ENCODE measurements at regions of chr3 and their contacts with region 1.

Region 1: GRCh38 chr3:140972833-140973232 is 31.2 kb downstream of the SLC25A36 start:
- DNase-seq: no peak
- ATAC-seq: no peak
- H3K4me3 ChIP-seq: no peak overlapping the region
- H3K27ac ChIP-seq: no peak overlapping the region
- H3K4me1 ChIP-seq: peaks cover 2% of the 10 kb centered on the region
- H3K27me3 ChIP-seq: no peaks in the 10 kb centered on the region

Region 2: DNA sequence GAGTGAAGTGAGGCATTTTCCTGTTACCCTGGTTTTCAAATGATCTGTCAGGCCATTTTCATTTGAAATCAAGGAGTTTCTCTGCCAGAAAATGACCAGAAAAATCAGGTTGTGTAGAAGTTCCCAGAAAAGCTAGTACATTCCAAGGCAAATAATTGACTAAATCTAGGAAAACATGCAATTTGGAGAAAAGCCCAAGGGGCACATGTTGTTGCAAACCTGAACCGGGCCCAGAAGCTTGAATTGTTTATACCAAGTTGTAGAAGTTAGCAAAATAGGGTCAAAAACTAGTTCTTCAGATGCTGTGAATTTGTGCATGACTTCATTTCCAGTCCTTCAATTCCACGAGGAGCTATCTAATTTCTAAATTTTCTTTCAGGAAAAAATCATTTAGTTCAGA is 264.0 kb before region 1 on chr3:
- intact Hi-C with region 1: no loop called
- DNase-seq: no peak
- ATAC-seq: peak in 1 of 2 donors; percentile 43
- H3K4me3 ChIP-seq: no peak overlapping the region
- H3K27ac ChIP-seq: no peak overlapping the region
- H3K4me1 ChIP-seq: no peaks in the 10 kb centered on the region
- H3K27me3 ChIP-seq: no peaks in the 10 kb centered on the region

Region 3: DNA sequence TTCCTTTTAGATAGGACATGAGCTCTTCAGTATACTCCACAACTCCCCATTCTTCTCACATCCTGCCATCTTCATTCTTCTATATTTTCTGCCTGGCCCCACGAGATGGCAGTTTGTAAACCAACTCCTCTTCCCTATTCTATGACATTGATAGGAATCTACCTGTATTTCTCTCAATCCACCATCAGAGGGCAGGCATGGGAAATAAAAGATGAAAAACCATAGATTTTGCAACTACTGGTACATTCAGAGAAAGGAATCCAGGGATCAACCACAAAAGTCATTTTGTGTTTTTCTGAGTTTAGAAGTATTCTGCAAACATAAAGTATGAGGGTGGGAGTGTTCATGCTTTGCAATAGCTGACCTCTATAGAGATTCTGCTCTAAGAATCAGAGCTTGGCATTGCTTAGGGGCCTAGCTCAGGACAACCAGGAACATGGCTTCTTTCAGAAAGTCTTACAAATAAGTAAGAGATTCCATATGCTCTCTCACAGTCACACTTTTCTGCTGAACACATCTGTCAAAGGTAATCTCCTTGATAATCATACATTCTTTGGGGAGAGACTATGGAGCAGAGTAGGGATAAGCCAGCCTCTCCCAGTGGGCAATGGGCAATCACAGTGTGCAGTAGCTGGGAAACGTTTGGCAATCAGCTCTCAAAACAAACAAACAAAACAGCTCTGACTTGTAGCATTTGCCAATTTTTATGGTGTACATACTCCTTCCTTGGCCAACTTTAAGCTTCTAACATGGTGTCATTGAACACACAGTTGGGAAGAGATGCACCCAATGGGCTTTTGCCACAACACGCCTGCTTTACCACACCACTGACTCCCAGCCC is 74.3 kb before region 1 on chr3:
- intact Hi-C with region 1: no loop called
- DNase-seq: no peak
- ATAC-seq: no peak
- H3K4me3 ChIP-seq: no peak overlapping the region
- H3K27ac ChIP-seq: no peak overlapping the region
- H3K4me1 ChIP-seq: no peaks in the 10 kb centered on the region
- H3K27me3 ChIP-seq: no peaks in the 10 kb centered on the region

Region 4: DNA sequence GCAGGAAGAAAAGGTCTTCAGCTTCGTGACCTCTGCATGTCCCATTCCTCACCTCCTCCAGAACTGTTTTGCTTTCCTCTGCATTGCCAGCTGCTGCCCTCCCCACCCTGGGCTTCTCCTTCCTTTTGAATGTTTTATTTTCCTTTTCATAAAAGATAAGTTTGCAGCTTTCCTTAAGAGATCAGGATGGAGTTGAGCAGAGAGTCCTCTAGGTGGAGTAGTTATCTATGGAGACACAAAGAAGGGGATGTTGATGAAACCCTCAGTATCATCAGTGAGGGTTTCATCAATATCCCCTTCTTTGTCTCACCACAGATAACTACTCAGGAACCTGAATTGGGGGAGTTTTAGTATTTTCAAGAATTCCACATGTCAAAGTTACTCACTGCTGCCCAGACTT is 50.2 kb before region 1 on chr3:
- intact Hi-C with region 1: loop called in 1 of 4 experiments (anchors 10 kb)
- DNase-seq: no peak
- ATAC-seq: no peak
- H3K4me3 ChIP-seq: no peak overlapping the region
- H3K27ac ChIP-seq: peak overlapping the region; percentile 28
- H3K4me1 ChIP-seq: no peaks in the 10 kb centered on the region
- H3K27me3 ChIP-seq: no peaks in the 10 kb centered on the region

Measured in right cardiac atrium (tissue), 5 donors.